ENCODE measurements at regions of chr2 and their contacts with region 1.

Region 1: DNA sequence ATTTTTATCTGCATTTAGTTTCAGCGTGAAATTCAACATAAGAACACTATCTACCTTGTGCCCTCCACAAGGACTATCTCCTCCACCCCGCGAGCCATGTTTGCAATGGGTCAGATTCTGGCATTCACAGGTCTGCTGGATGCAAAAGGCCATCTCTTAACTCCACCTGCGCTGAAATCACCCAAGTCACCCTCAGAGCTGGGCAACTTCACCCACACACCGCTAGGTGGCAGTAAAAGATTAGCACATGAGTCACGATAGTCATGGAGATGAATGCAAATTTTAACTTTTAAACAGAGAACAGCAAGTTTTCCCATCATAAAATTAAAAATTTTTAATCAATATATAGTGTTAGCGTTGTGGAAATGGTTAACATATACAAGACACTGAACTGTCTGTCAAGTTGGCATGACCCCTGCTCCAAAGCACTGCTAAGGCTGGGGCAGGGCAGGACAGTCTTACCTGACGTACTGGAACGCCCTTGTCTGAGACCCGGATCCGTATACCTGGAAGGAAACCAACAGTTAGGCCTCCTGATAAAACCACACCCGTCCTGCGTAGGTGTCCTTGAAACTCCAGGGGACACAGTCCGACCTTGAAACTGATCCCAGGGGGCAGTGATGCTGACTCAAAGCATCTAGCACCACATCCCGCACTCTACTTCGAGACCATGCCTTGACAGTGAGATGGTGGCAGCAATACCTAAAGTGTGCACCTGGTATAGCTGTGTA is 89.6 kb downstream of the UXS1 start:
- DNase-seq: peak; percentile 62
- H3K4me3 Mint-ChIP-seq: no peak overlapping the region
- H3K27ac Mint-ChIP-seq: peak overlapping the region; percentile 18
- H3K4me1 Mint-ChIP-seq: peaks cover 16% of the 10 kb centered on the region
- H3K27me3 Mint-ChIP-seq: no peaks in the 10 kb centered on the region

Region 2: DNA sequence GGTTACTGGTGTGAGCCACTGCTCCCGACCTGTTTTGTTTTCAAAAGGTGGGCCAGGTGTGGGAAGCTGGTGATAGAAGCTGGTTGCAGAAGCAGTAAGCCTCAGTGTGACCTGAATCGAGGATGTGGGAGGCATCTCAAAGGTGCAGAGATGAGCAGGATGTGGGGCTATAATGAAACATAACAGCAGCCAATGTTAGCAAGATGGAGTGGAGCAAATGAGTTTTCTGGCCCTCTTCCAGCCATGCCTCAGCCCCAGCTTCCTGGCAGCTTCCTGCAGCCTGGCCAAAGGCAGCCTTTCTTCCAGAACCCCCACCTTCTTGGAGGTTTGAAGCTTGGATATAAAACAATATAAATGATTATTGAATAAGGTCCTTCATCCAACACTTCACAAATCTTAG is 175.0 kb before region 1 on chr2:
- intact Hi-C with region 1: no loop called
- DNase-seq: peak; percentile 21
- H3K4me3 Mint-ChIP-seq: peak overlapping the region; percentile 22
- H3K27ac Mint-ChIP-seq: peak overlapping the region; percentile 73
- H3K4me1 Mint-ChIP-seq: peaks cover 44% of the 10 kb centered on the region
- H3K27me3 Mint-ChIP-seq: no peaks in the 10 kb centered on the region

Region 3: GRCh38 chr2:106147159-106147558 is 42.7 kb after region 1 on chr2:
- intact Hi-C with region 1: loop called (anchors 5 kb)
- DNase-seq: no peak
- H3K4me3 Mint-ChIP-seq: no peak overlapping the region
- H3K27ac Mint-ChIP-seq: peak overlapping the region; percentile 8
- H3K4me1 Mint-ChIP-seq: peaks cover 47% of the 10 kb centered on the region
- H3K27me3 Mint-ChIP-seq: no peaks in the 10 kb centered on the region

Region 4: DNA sequence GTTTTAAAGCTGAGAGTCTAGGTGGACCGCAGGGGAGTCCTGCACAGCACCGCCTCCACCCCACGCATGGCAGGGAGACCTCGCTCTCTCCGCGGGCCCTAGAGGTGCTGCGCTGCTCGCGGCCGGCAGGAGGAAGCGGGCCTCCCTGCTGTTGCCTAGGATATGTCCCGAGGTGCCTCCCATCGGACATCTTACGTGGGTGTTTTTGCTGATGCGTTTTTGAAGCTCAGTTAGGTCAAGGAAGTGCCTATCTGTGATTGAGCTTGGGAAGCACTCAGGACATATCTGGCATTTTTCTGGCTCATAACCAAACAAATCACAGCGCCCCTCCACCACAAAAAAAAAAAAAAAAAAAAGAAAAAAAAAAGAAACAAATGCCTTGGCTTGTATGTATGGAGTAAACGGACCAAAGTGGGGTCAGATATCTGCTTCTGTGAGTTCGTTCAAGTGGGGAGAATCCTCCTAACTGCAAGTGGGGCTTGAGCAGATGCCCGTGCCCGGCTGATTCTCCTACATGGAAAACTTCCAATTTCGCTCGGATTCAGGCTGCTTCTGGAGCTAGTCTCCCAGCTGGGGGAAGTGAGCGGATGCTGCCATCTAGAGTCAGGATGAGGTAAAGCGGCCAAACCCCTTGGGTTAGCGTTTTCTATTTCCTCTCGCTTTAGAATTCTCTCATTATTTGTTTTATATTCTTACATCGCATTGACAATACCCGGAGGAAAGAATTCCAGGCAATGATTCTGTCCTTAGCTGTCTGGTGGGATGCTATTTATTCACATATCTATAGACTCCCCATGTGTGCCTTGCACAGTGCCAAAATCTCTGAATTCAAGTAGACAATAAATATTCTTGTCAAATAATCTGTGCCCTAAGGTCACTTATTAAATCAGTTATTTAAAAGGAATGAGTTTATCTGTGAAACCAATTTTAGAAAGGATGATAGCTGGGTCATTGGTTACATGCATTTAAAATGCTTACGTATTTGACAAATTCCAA is 477.9 kb after region 1 on chr2:
- intact Hi-C with region 1: loop called (anchors 2 kb)
- DNase-seq: peak; percentile 36
- H3K4me3 Mint-ChIP-seq: peak overlapping the region; percentile 85
- H3K27ac Mint-ChIP-seq: no peak overlapping the region
- H3K4me1 Mint-ChIP-seq: peaks cover 18% of the 10 kb centered on the region
- H3K27me3 Mint-ChIP-seq: peaks cover 24% of the 10 kb centered on the region

Measured in activated T-helper 1 cell treated with anti-CD3 and anti-CD28 coated beads, Interleukin-12 subunit alpha, Interleukin-12 subunit beta, Interleukin-2, Interleukin-4 antibody, amounts not matched to agents 30 ng/mL and 10 ng/mL and 1 ng/mL, durations not matched to agents 14 hours and 24 hours and 36 hours (primary cell).